ENCODE measurements at regions of chr12 and their contacts with region 1.

Region 1: DNA sequence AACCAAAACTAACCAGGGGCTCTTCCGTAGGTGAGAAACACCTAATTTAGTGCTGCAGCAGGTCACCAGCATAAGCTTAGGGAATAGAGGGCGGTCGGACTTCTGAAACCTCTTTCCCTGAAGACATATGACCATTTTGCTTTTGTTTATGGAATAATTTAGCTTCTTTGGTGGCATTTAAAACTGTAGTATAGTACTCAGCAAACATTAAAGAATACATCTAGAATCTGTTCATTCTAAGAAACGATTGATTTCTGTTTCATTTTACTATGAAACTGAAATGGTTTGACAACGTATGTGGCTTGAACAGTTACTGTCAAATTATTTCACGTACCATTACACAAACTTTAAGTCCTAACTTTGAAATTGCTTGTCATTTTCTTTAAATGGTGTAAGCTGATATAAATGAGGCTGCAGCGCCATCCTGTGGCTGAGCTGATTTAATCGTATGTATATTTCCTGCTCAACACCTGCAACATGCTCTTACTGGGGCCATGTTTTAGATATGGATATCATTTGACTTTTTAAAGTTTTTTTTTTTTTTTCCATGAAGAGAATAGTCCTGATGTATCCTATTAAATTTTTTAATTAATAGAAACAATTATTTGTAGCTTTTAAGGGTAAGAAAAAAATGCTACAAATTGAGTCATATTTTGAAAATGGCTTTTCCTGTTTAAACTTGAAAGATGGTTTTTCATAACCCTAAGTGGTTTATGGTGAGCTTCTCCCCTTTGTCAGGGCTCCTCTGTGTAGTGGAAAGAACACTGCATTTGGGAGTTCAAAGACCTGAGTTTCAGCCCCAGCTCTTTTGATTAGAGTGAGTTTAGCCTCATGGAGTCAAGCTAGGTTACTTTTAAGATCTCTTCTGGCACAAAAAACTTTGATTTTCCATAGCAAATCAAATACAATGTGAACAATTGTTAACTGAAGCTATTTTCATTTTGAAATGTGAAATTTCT is 27.4 kb downstream of the CFAP54 start:
- DNase-seq: peak; percentile 51 to 88
- ATAC-seq: peak; percentile 72

Region 2: DNA sequence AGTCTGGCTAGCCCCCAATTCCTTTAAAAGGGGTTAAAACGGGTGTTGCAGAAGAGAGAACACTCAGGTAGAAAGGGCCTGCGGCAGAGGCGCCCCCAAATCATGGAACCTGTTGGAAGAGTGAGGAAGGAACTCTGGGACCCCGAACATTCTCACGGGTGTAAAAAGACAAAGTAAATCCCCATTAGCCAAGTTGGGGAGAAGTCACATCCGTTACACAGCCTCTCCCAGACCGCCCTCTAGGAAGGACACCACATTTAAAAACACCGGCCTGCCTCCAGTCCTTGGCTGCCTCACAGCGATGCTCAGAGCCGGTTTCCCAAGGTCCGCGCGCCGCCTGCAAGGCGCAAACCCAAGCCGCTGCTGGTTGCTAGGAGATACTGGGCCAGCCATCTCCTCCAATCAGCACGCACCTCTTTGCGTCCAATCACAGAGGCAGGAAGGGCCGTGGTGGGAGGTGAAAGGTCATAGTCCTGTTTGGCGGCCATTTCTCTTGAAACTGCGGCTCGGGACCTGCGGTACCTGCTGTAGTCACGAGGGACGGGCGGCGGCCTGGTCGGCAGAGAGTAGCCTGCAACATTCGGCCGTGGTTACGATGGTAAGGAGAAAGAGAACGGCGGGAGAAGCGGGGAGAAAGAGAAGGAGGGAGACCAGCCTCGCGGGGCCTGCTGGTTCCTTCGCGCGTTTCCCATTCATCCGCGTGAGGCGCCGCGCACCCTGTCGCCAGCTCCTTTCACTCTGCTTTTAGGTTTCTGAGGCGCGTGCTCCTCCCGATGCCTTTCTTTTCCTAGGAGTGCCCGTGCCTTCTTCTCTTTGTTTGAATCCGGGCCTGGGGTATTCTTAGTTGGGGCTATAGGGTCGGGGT is 658.0 kb before region 1 on chr12 and contains the start of gene SNRPF:
- intact Hi-C with region 1: no loop called
- DNase-seq: peak; percentile 94 to 96
- ATAC-seq: peak; percentile 99
- total RNA-seq, gene SNRPF: 13.5 to 17.4 TPM

Region 3: DNA sequence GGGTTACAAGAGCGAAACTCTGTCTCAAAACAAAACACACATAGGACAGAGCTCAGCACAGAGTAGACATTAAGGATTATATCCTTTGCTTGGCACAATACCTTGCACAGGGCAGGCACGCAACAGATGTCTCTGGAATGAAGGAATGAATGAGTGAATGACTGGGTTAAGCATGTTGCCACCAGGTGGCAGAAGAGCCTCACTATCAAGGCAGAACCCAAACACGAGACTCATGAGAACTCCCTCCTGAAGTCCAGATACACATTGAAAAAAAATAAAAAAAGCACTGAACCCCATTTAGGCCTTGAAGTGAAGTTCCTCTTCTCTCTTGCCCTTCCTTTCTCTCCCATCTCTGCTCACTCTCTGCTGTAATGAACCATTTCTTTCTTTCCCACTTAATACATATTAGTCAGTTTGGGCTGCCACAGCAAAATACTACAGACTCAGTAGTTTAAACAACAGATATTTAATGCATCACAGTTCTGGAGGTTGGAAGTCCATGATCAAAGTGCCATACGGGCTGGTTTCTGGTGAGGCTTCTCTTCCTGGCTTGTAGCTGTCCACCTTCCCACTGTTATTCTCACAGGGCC is 454.8 kb before region 1 on chr12:
- intact Hi-C with region 1: loop called (anchors 2 to 10 kb)
- DNase-seq: peak; percentile 61 to 88
- ATAC-seq: peak; percentile 97

Region 4: GRCh38 chr12:96208801-96209549 is 307.8 kb before region 1 on chr12:
- intact Hi-C with region 1: loop called in 1 of 2 experiments (anchors 5 kb)
- DNase-seq: no peak
- ATAC-seq: no peak

Region 5: DNA sequence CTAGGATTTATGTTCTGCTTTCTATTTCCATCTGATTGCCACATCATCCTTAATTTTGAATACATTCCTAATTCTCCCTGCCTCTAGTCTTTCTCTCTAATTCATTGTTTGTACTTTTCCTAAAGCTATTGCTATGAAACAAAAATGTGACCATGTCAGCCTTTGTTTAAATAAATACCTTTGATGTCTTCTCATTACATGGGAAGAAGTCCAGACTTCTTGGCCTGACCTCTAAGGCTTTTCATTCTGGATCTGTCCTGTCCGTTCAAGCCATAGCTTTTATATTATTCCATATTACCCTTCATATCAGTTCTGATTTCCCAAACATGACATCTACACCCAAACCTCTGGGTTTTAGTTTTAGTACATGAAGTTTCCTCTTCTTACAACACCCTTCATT is 207.9 kb before region 1 on chr12:
- intact Hi-C with region 1: no loop called
- DNase-seq: no peak
- ATAC-seq: no peak

Measured in left colon (tissue), 2 donors.